ENCODE measurements at regions of chr19 and their contacts with region 1.

Region 1: GRCh38 chr19:2475702-2476450 is at the start of gene GADD45B:
- DNase-seq: peak; percentile 95
- H3K4me3 ChIP-seq: peak within 1 kb of the TSS; percentile 84 to 98 (median 94)
- H3K27ac ChIP-seq: peak within 1 kb of the TSS; percentile 77
- H3K4me1 ChIP-seq: peaks cover 23% of the 10 kb centered on the region
- H3K27me3 ChIP-seq: no peaks in the 10 kb centered on the region
- CTCF ChIP-seq: no peak
- total RNA-seq, gene GADD45B: 18.0 to 83.9 TPM

Region 2: DNA sequence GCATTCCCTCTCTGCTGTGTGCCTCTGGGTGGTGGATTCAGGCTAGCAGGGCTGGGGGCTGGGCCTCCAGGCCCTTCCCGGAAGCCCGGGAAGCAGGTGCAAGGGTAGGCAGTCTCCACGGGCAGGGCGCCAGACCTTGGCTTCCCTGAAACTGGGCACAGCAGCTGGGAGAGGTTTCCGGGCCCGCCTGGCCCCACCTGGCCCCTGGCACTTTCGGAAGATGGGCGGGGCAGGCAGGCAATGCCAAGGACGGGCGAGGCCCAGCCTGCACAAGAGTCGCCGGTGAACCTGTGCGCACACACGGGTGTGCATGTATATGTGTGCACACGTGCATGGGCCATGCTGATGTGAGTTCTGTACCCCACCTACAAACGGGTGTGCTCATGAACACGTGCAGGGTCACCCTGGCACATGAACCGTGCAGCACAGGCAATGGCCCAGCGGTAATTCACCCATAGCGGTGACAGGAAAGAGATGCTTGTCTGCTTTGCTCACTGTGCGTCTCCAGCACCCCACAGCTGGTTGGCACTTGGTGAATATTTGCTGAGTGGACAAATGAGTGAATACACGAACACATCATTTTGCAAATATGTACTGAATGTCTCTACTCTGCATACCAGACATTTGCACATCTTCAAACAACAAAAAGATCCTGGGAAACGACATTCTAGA is 15.4 kb after region 1 on chr19:
- CTCF ChIA-PET with region 1: no interaction called
- dilution Hi-C with region 1: no loop called
- in situ Hi-C with region 1: no loop called
- intact Hi-C with region 1: loop called (anchors 1 kb)
- DNase-seq: peak; percentile 78
- H3K4me3 ChIP-seq: no peak overlapping the region
- H3K27ac ChIP-seq: peak overlapping the region; percentile 49
- H3K4me1 ChIP-seq: peaks cover 42% of the 10 kb centered on the region
- H3K27me3 ChIP-seq: no peaks in the 10 kb centered on the region
- CTCF ChIP-seq: no peak

Region 3: DNA sequence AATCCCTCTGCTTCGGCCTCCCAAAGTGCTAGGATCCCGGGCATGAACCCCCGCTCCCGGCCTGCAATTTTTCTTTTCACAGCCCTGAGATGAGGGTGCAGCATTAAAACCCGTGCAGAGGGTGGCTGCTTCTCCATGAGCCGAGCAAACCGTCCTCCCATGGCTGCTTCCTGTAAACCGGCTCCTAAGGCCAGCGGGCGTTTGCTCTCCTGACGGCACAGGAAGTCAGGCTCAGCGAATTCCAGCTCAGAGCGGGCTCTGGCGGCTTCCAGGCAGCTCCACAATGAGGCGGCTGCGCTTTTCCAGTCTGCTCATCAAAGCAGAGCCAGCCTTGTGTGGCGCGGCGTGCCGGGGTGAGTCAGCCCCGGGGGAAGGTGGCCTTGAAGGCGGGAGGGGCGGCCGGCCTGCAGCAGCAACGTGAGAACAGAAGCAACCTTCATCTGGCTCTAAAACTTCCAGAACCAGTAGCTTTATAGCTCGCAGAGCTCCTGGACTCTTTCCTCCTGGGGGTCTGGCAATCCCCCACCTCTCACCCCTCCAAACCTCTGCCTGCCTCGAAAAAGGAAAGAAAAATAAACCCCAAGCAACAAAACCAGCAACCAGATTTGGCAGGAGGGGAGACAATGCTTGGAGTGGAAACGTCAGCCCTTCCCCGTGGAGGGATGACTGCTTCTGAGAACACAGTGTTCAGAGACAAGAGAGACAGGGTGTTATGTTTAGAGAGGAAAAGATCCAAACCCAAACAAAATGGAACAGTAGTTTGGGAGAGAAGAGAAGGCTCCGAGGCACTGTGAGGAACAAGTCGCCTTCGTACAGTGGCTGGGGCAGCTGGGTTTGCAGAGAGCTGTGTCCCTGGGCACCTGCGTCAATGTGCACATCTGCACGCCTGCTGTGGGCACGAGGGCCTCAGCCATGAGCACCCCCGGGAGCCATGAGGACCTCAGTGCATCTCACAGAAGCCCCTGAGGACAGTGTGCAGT is 67.9 kb after region 1 on chr19:
- CTCF ChIA-PET with region 1: interaction called, 3 read pairs
- dilution Hi-C with region 1: no loop called
- in situ Hi-C with region 1: loop called in 1 of 2 experiments (anchors 10 kb)
- intact Hi-C with region 1: loop called (anchors 1 kb)
- DNase-seq: peak; percentile 96
- H3K4me3 ChIP-seq: no peak overlapping the region
- H3K27ac ChIP-seq: peak overlapping the region; percentile 51
- H3K4me1 ChIP-seq: peaks cover 36% of the 10 kb centered on the region
- H3K27me3 ChIP-seq: no peaks in the 10 kb centered on the region
- CTCF ChIP-seq: peak; percentile 6 to 56

Region 4: GRCh38 chr19:2578901-2579677 is 103.2 kb after region 1 on chr19:
- CTCF ChIA-PET with region 1: interaction called, 3 read pairs
- dilution Hi-C with region 1: no loop called
- in situ Hi-C with region 1: no loop called
- intact Hi-C with region 1: loop called (anchors 1 kb)
- DNase-seq: peak; percentile 69
- H3K4me3 ChIP-seq: peak overlapping the region; percentile 26 to 53 (median 50)
- H3K27ac ChIP-seq: no peak overlapping the region
- H3K4me1 ChIP-seq: peaks cover 20% of the 10 kb centered on the region
- H3K27me3 ChIP-seq: no peaks in the 10 kb centered on the region
- CTCF ChIP-seq: peak; percentile 62 to 87

Region 5: DNA sequence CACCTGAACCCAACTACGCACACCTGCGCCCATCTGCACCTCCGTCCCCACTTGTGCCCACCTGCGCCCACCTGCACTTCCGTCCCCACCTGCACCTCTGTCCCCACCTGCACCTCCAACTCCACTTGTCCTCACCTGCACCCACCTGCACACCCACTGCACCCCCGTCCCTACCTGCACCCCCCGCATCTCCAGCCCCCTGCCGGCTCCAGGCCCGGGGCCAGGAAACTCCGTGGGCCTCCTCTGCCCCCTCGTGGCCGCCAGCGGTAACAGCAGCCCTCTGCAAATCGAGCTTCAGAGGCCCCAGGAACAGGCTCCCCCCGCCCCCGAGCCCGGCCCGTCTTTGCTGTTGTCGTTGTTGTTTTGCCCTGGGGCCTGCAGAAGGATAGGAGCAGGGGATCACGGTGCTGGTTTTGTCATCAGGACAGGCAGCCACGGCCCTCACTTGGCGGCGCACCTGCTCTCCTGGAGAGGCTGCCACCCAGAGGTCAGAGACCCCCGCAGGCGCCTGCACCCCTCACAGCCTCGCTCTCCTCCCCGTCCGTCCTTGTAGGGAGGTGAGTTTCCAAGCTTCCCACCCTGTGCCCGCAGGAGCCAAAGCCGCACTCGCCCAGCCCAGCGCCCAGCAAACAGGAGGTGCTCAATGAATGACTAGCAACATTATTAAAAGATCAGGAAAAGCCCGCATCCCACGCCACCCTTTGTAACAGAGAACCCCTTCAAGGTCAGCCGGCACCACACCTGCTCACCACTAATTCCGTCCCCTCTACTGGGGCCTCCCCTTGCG is 161.2 kb after region 1 on chr19:
- CTCF ChIA-PET with region 1: interaction called, 16 read pairs
- dilution Hi-C with region 1: no loop called
- in situ Hi-C with region 1: no loop called
- intact Hi-C with region 1: loop called (anchors 1 kb)
- DNase-seq: no peak
- H3K4me3 ChIP-seq: no peak overlapping the region
- H3K27ac ChIP-seq: no peak overlapping the region
- H3K4me1 ChIP-seq: peaks cover 11% of the 10 kb centered on the region
- H3K27me3 ChIP-seq: no peaks in the 10 kb centered on the region
- CTCF ChIP-seq: peak; percentile 55 to 92

Measured in mammary epithelial cell (primary cell).